ENCODE measurements at regions of chr11 and their contacts with region 1.

Region 1: DNA sequence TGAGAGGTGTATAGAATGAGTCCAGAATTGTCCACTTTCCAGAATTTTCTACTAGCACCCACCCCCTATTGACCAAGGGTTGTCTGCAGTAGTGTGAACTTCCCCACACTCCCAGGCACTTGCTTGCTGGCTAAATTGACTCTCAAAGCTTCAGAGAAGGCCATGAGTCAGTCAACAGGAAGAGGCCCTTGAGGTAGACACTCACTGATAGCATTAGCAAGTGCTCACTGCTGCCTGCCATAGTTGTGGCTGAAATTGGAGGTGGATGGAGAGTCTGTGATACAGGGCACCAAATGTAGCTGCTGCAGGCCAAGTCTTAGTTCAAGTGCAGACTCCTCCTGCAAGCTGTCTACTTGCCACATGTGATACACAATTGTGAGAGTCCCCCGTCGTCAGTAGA is 156.8 kb downstream of the SPON1 start:
- DNase-seq: peak; percentile 67
- H3K4me3 Mint-ChIP-seq: no peak overlapping the region
- H3K27ac Mint-ChIP-seq: no peak overlapping the region
- H3K4me1 Mint-ChIP-seq: peaks cover 19% of the 10 kb centered on the region
- H3K27me3 Mint-ChIP-seq: no peaks in the 10 kb centered on the region

Region 2: GRCh38 chr11:14101388-14101787 is 18.0 kb before region 1 on chr11:
- CTCF ChIA-PET with region 1: no interaction called
- intact Hi-C with region 1: loop called (anchors 1 kb)
- DNase-seq: no peak
- H3K4me3 Mint-ChIP-seq: no peak overlapping the region
- H3K27ac Mint-ChIP-seq: no peak overlapping the region
- H3K4me1 Mint-ChIP-seq: peaks cover 21% of the 10 kb centered on the region
- H3K27me3 Mint-ChIP-seq: no peaks in the 10 kb centered on the region

Measured in activated naive CD4-positive, alpha-beta T cell treated with anti-CD3 and anti-CD28 coated beads for 36 hours (primary cell).